Mammary epithelial cell (primary cell): ENCODE measurements at regions of chr16 and their contacts with region 1.

Region 1: DNA sequence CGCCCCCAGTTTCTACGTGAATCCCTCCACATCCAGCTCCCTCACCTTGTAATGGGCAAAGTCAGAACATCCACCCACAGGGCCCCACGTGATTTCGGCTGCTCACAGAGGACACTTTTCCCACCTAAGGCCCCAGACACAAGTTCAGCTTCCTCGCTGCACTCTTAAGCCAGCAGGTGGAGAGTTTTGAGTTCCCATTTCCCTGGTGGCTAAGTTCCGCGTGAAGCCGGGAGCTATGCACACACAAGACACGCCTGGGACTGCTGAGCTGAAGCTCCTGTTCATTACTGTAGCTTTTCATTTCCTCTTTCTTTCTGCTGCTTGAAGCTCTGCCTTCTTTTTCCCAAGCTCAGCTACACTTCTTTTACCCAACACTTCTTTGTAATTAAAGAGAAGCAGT is 273.8 kb downstream of the NPIPA8 start:
- DNase-seq: no peak
- H3K4me3 ChIP-seq: no peak overlapping the region
- H3K27ac ChIP-seq: no peak overlapping the region
- H3K4me1 ChIP-seq: no peaks in the 10 kb centered on the region
- H3K27me3 ChIP-seq: no peaks in the 10 kb centered on the region
- CTCF ChIP-seq: no peak

Region 2: DNA sequence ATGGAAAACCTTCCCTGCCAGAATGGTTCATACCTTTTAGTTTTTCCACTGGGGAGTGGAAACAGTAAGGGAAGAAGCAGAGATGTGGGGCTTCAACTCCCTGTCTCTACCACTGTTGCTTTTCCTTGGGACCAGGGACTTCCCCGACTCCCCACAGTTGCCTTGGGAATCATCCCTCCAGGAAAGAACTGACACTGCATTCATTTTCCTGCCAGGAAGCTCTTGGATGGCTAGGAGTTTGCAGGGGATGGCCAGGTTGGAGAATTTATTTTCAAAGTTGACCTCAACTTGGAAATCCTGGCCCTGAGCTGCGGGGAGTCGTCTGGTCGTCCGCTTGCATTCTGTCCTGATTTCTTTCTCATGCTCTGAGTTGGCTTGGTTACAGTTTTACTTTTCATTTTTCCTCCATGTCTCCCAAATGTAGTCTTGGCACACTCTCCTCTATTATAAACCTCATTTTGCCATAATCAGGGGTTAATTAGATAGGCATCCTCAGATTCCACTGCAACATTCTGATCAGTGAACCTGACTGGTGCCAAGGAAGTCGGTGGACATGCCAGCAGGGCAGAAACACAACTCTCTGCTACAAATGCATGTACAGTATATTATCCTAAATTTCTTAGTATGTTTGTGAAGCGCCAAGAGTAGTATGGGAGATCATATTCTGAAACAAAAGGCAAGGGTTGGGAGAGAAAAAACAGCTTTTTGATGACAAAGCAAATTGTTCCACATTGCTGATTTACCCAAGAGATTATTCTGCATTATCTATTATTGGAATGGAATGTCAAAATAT is 371.4 kb before region 1 on chr16:
- CTCF ChIA-PET with region 1: no interaction called
- dilution Hi-C with region 1: no loop called
- in situ Hi-C with region 1: no loop called
- intact Hi-C with region 1: no loop called
- DNase-seq: no peak
- H3K4me3 ChIP-seq: no peak overlapping the region
- H3K27ac ChIP-seq: no peak overlapping the region
- H3K4me1 ChIP-seq: no peaks in the 10 kb centered on the region
- H3K27me3 ChIP-seq: no peaks in the 10 kb centered on the region
- CTCF ChIP-seq: no peak

Region 3: GRCh38 chr16:17921355-17921953 is 141.3 kb before region 1 on chr16:
- CTCF ChIA-PET with region 1: no interaction called
- dilution Hi-C with region 1: no loop called
- in situ Hi-C with region 1: loop called in 1 of 2 experiments (anchors 25 kb)
- intact Hi-C with region 1: no loop called
- DNase-seq: peak; percentile 21
- H3K4me3 ChIP-seq: no peak overlapping the region
- H3K27ac ChIP-seq: no peak overlapping the region
- H3K4me1 ChIP-seq: no peaks in the 10 kb centered on the region
- H3K27me3 ChIP-seq: no peaks in the 10 kb centered on the region
- CTCF ChIP-seq: peak; percentile 35 to 52

Region 4: GRCh38 chr16:17983847-17984639 is 78.7 kb before region 1 on chr16:
- CTCF ChIA-PET with region 1: no interaction called
- dilution Hi-C with region 1: no loop called
- in situ Hi-C with region 1: loop called in 1 of 2 experiments (anchors 10 kb)
- intact Hi-C with region 1: no loop called
- DNase-seq: no peak
- H3K4me3 ChIP-seq: no peak overlapping the region
- H3K27ac ChIP-seq: no peak overlapping the region
- H3K4me1 ChIP-seq: no peaks in the 10 kb centered on the region
- H3K27me3 ChIP-seq: no peaks in the 10 kb centered on the region
- CTCF ChIP-seq: no peak

Region 5: GRCh38 chr16:18009612-18010011 is 53.1 kb before region 1 on chr16:
- CTCF ChIA-PET with region 1: no interaction called
- dilution Hi-C with region 1: no loop called
- in situ Hi-C with region 1: no loop called
- intact Hi-C with region 1: no loop called
- DNase-seq: peak; percentile 5
- H3K4me3 ChIP-seq: no peak overlapping the region
- H3K27ac ChIP-seq: no peak overlapping the region
- H3K4me1 ChIP-seq: no peaks in the 10 kb centered on the region
- H3K27me3 ChIP-seq: no peaks in the 10 kb centered on the region
- CTCF ChIP-seq: no peak